PC-9 (cell line): ENCODE measurements at regions of chr5 and their contacts with region 1.

Region 1: DNA sequence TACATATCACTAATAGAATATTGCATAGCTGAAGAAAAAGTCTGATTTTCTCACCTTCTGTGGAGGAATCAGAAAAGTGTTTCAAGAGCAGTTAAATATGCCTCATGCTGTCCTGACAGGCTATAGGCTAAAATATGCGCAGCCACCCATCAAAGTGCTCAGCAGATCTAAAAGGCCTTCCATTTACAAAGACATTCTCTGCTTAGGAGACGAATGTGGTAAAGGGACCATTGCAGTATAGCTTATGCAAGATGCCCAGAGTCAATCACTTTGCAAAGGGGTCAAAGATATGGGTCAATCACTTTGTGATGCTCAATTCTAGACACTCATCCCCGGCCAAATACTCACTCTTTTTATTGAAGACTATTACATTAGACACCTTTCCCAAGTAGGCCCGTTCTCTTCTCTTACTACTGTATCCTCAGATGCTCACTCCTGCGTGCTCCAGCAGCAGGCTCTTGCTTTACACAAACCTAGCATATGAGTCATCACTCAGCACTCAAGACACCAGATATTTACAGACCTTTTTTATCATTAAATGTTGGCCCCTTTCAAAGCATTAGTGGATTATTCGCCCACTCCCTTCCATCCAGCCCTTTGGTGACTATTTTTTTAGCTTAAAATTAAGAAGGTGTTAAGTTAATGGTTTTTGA is 568.2 kb upstream of the CDH18 start:
- DNase-seq: no peak
- H3K4me3 ChIP-seq: no peak overlapping the region
- H3K27ac ChIP-seq: no peak overlapping the region
- H3K4me1 ChIP-seq: no peaks in the 10 kb centered on the region
- H3K27me3 ChIP-seq: no peaks in the 10 kb centered on the region
- CTCF ChIP-seq: no peak

Region 2: DNA sequence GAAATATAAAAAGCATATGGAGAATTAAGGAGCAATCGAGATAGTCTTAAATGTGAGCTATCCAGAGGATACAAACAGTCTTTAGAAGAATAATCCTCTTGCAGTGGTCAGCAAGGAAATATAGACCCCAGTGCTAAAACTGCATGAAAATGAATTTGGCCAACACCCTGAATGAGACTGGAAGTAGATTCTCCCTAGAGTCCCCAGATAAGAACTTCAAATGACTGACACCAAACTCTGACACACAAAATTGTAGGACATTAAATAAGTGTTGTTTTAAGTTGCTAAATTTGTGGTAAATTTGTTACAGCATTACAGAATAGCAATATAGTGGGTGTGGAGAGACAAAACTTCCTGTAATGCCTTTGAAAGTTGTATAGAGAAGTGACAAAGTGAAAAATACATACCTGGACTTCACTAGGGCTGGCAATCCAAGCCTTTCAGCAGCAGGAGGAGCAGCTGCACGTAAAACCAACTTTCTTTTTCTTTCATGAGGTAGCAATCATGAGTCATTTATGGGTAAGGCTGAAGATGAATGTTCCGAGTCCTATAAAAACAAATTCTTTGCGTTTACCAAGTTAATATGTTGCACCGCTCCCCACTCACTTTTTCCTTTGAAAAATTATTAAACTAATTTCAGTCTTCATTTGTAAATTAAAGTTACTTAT is 1783.9 kb before region 1 on chr5:
- CTCF ChIA-PET with region 1: no interaction called
- POLR2A ChIA-PET with region 1: no interaction called
- intact Hi-C with region 1: loop called (anchors 2 kb)
- DNase-seq: peak; percentile 48 to 56
- H3K4me3 ChIP-seq: no peak overlapping the region
- H3K27ac ChIP-seq: no peak overlapping the region
- H3K4me1 ChIP-seq: no peaks in the 10 kb centered on the region
- H3K27me3 ChIP-seq: no peaks in the 10 kb centered on the region
- CTCF ChIP-seq: peak; percentile 55